Endothelial cell of umbilical vein (primary cell): ENCODE measurements at regions of chr4 and their contacts with region 1.

Region 1: DNA sequence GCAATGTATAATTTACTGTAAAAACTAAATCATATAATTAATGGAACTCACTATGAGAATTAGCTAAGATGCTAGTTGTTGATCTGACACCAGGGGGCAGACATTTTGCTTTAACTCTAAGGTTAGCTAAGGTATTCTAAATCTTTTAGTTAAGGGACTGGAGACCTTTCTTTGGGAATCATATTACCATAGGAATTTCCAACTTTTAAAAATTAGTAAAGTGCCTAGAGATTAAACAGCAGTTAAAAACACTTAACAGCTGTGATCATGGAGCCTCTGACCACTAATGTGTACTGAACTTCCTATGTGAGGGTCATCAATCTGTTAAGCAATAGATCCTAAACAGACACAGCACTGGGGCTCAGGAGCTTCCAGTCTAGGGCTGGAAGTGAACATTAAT is 226.6 kb downstream of the NSUN7 start:
- DNase-seq: peak; percentile 76
- H3K4me3 ChIP-seq: no peak overlapping the region
- H3K27ac ChIP-seq: peak overlapping the region; percentile 5
- H3K4me1 ChIP-seq: peaks cover 8% of the 10 kb centered on the region
- H3K27me3 ChIP-seq: no peaks in the 10 kb centered on the region
- CTCF ChIP-seq: peak; percentile 37 to 44
- POLR2A ChIP-seq: no peak

Region 2: DNA sequence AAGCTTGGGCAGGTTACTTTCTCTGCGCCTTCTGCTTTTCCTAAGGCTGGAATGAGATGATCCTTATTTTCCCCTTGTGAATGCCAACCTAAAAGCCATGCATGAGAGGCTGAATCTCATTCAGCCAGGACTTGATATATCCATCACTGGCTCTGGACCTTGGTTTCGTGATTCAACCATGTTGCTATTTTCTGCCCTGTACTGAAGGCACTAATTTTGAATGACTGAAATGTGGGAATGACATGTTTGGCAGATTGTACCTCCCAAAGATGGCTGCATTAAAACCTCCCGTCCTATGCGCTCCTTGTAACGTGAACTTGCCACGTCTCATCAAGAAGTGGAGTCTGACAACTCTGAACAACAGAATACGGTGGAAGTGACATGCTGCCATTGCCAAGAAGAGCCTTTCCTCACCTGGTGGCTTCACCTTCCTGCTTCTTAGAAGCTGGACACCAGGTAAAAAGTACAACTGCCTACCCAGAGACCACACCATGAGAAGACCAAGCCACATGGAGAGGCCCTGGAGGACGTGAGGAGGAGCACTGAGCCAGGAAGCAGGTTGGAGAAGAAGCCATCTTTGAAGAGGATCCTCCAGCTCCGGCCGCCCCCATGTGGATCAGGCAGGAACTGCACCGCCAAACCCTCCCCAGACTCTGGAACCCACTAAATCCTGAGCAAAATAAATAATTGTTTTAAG is 52.1 kb before region 1 on chr4:
- CTCF ChIA-PET with region 1: interaction called, 9 read pairs
- POLR2A ChIA-PET with region 1: no interaction called
- dilution Hi-C with region 1: no loop called
- intact Hi-C with region 1: loop called (anchors 5 kb)
- DNase-seq: peak; percentile 68
- H3K4me3 ChIP-seq: no peak overlapping the region
- H3K27ac ChIP-seq: no peak overlapping the region
- H3K4me1 ChIP-seq: no peaks in the 10 kb centered on the region
- H3K27me3 ChIP-seq: no peaks in the 10 kb centered on the region
- CTCF ChIP-seq: peak; percentile 90 to 94
- POLR2A ChIP-seq: no peak

Region 3: DNA sequence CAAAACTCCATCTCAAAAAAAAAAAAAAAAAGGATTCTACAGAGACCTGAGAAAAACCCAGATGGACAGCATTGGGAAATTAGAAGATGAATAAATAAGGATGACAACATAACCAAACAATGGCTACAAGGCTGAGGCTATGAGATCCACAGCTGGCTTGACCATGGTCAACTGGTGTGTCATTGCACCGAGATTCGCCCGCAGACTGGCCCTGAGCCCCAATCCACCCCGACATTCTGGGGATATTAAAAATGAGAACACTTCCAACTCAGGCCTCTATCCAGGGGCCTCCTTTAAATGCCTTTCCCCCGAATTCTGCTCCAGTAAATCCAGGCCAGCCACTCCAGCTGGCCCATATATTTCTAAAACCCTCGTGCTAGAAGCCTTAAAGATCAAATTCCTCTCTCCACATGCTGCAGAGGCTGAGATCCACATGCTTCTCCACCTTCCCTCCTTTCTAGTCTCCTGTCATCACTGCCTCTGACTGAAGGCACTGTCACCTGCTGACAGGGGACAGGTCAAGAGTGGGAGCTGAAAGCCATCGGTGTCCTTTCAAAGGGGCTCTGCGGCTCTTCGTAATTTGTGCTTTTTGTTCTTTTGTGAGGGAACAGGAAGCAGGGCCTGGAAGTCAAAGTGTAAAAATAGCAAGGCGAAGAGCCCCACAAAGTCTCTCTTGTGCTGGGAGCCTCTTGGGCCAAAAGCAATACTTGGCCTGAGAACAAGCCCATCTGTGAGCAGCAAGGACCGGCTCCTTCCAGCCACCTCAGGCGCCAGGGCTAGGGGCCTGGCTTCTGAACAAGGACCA is 22.9 kb before region 1 on chr4:
- CTCF ChIA-PET with region 1: interaction called, 12 read pairs
- POLR2A ChIA-PET with region 1: no interaction called
- dilution Hi-C with region 1: no loop called
- intact Hi-C with region 1: no loop called
- DNase-seq: peak; percentile 16
- H3K4me3 ChIP-seq: no peak overlapping the region
- H3K27ac ChIP-seq: no peak overlapping the region
- H3K4me1 ChIP-seq: peaks cover 5% of the 10 kb centered on the region
- H3K27me3 ChIP-seq: no peaks in the 10 kb centered on the region
- CTCF ChIP-seq: no peak
- POLR2A ChIP-seq: no peak

Region 4: DNA sequence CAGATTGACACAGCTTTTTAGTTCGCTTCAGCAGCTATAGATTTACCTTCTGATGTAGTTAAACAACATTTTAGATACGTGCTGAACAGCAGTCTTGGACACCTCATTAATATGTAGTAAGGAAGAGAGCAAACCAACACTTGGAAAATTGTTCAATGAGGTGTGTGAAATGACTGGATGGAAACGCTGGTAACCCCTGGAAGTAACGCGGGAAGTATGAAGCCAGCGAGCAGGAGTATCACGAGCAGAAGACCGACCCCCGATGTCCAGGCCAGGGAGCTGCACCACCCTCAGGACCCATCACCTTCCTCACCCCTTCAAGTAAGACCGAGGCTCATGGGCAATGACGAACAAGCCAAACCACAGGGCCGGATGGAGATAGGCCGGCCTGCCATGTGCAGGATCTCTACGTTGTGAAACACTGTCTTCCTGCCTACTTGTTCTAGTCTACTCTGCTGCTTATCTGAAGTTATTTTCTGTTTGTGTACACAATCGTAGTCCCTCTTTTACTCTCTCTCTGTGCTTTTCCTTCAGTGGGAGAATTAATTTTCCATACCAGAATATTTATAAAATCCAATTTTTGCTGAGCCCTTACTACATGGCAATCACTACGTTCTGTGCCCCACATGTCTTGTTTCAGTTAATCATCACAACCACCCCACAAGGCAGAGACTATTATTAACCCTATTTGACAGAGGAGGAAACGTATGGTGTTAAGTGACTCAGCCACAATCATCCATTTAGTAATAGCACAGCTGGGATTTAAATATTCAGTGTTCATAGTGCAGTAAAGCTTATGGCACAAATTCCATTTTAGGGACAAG is 16.3 kb after region 1 on chr4:
- CTCF ChIA-PET with region 1: interaction called, 13 read pairs
- POLR2A ChIA-PET with region 1: no interaction called
- dilution Hi-C with region 1: no loop called
- intact Hi-C with region 1: no loop called
- DNase-seq: peak; percentile 82
- H3K4me3 ChIP-seq: no peak overlapping the region
- H3K27ac ChIP-seq: peak overlapping the region; percentile 84
- H3K4me1 ChIP-seq: peaks cover 62% of the 10 kb centered on the region
- H3K27me3 ChIP-seq: no peaks in the 10 kb centered on the region
- CTCF ChIP-seq: no peak
- POLR2A ChIP-seq: no peak

Region 5: DNA sequence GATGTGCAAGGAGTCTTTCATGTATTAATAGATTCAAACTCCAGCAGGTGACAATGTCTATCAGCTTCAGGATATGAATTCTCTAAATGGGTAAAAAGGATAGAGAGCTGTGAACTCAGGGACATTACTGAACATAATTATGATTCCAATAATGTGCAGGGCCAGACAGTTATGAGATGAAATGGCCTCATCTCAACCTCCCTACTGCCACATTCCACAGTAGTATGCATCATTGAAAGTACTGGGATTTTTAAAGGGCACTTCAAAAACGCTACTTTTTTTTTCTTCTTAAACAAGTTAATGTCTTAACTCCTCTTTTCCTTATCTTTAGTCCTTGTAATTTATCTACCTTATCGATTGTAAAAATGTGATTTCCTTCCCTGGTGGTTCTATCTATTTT is 36.0 kb after region 1 on chr4:
- CTCF ChIA-PET with region 1: interaction called, 10 read pairs
- POLR2A ChIA-PET with region 1: no interaction called
- dilution Hi-C with region 1: no loop called
- intact Hi-C with region 1: no loop called
- DNase-seq: no peak
- H3K4me3 ChIP-seq: no peak overlapping the region
- H3K27ac ChIP-seq: no peak overlapping the region
- H3K4me1 ChIP-seq: peaks cover 11% of the 10 kb centered on the region
- H3K27me3 ChIP-seq: no peaks in the 10 kb centered on the region
- CTCF ChIP-seq: no peak
- POLR2A ChIP-seq: no peak

Region 6: GRCh38 chr4:41204400-41204978 is 228.1 kb after region 1 on chr4:
- CTCF ChIA-PET with region 1: interaction called, 22 read pairs
- POLR2A ChIA-PET with region 1: no interaction called
- dilution Hi-C with region 1: no loop called
- intact Hi-C with region 1: no loop called
- DNase-seq: peak; percentile 80
- H3K4me3 ChIP-seq: no peak overlapping the region
- H3K27ac ChIP-seq: peak overlapping the region; percentile 63
- H3K4me1 ChIP-seq: peaks cover 85% of the 10 kb centered on the region
- H3K27me3 ChIP-seq: no peaks in the 10 kb centered on the region
- CTCF ChIP-seq: no peak
- POLR2A ChIP-seq: no peak

Region 7: DNA sequence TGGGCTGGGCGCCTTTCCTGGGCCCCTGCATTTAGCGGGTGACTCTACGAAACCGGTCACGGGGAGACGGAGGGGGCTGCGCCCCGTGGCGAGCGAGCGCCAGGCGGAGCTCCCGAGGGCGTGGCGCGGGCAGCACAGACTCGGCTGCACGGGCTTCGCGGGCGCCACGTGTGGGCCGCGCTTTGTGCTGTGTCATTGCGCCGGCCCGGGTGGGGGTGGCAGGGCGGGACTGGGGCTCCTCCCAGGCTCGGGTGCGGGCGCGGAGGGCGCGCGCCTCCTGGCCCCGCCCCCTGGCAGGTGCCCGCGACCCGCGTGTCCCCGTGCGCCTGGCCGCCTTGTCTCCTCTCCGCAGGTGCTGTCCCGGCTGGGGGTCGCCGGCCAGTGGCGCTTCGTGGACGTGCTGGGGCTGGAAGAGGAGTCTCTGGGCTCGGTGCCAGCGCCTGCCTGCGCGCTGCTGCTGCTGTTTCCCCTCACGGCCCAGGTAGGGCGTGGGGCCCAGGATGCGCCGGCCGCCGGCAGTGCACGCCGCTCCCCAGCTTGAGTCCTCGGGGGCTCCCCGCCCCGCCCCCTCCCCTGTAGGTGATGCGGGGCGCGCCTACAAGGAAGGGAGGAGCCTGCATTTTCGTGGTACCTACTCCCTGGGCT is 281.0 kb after region 1 on chr4:
- CTCF ChIA-PET with region 1: interaction called, 8 read pairs
- POLR2A ChIA-PET with region 1: no interaction called
- dilution Hi-C with region 1: no loop called
- intact Hi-C with region 1: loop called (anchors 2 kb)
- DNase-seq: peak; percentile 36
- H3K4me3 ChIP-seq: peak overlapping the region; percentile 35 to 54 (median 48)
- H3K27ac ChIP-seq: peak overlapping the region; percentile 0
- H3K4me1 ChIP-seq: peaks cover 12% of the 10 kb centered on the region
- H3K27me3 ChIP-seq: peaks cover 14 to 15% of the 10 kb centered on the region in 2 experiments
- CTCF ChIP-seq: no peak
- POLR2A ChIP-seq: no peak